ENCODE measurements at regions of chr10 and their contacts with region 1.

Region 1: DNA sequence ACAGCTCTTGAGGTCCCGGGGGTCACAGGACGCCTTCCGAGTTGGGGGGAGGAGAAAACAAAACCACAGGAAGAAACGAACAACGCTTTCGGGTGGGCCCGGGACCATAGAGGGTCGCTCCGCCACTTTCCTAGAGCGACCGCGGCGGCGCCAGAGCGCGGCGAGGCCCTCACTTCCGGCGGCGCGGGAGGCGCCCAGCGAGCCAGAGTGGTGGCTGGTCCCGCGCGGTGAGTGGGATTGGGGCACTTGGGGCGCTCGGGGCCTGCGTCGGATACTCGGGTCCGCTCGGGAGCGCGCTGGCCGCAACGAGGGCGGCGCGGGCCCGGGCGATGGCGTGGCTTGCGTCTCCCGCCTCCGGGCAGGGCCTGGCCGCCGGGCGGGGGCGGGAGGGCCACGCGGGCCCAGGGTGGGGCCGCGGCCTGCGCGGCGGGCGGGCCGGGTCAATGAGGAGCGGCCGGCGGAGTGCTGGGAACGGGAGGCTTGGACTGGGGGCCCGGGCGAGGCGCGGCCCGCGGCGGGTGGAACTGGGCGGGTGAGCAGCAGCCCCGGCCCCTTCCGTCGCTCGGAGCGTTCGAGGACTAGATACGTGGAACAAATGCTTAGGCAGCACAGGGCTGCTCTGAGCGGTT is at the start of gene ZNF22:
- DNase-seq: peak; percentile 35 to 67
- H3K4me3 ChIP-seq: peak within 1 kb of the TSS; percentile 65
- H3K27ac ChIP-seq: peak within 1 kb of the TSS; percentile 60
- H3K4me1 ChIP-seq: peaks cover 41% of the 10 kb centered on the region
- H3K27me3 ChIP-seq: no peaks in the 10 kb centered on the region
- CTCF ChIP-seq: no peak
- total RNA-seq, gene ZNF22: 22.4 and 29.9 TPM in 2 replicates

Region 2: DNA sequence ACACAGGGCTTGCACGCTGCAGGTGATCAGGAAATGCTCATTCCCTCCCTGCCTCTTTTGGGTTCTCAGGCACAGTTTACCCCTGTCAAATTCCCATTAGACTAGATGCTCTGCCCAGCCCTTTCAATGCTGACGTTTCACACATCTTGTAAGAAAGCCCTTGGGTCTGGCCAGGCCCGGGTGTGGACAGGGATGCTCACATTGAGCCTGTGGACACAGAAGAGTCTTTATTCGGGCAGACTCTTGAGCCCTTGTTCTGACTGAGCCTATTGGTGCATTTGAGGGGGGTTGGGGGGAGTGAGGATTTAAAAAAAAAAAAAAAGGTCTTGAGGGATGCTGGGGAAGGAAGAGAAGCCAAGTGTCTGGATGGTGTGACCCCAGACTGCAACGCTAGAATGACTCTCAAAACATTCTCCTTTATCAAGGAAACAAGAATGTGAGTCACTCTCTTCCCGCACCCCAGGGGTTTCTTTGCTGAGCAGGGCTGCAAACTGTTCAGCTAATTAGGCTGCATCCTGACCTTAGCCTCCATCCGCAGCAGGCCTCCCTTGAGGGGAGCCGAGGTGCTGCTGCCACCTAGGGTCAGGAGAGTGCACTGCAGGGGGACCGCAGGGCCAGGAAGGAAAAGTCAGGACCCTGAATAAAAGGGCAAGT is 143.4 kb before region 1 on chr10:
- CTCF ChIA-PET with region 1: no interaction called
- POLR2A ChIA-PET with region 1: no interaction called
- intact Hi-C with region 1: no loop called
- DNase-seq: peak; percentile 39 to 53
- H3K4me3 ChIP-seq: no peak overlapping the region
- H3K27ac ChIP-seq: no peak overlapping the region
- H3K4me1 ChIP-seq: no peaks in the 10 kb centered on the region
- H3K27me3 ChIP-seq: peaks cover 11% of the 10 kb centered on the region; the same call in 1 of the 2 replicates
- CTCF ChIP-seq: peak; percentile 97

Region 3: DNA sequence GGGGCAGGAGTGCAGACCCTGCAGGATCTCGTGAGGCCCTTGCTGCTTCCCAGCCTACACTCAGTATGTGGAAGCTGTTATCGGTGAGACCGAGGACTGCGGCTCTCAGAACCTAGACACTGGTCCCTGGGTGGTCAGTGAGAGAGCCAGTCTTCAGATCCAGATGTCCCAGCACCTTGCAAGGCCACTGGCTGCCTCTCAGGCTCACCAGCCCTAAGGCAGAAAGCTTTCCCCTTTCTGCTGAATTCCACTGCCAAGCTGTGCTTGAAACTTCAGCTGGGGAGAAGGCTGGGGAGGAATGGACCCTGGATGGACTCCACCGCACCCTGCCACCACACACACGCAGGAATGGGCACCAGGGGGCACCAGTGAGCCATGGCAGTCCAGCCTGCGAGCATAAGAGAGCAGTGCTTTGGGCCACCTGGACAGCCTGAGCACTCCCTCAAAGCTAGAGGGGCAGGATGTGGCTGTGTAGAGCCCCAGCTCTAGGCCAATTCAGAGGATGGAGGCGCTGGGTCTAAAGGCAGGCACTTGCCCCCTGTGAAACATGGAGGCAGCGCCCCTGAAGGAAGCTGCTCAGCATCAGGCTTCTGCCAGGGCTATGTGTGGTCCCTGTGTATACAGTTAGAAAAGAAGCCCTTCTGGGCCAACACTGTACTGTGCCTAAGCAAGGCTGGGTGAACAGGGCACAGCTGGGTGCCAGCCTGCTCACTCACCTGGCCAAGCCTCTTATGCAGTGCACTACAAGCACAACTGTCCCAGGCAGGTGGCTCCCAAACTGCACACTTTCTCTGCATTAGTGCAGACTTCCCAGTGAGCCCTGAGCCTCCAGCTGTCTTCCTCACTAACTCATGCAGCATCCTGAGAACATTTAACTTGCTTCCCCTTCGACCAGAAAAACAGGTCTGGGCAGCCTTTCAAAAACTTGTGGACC is 68.1 kb before region 1 on chr10:
- CTCF ChIA-PET with region 1: interaction called, 3 read pairs
- POLR2A ChIA-PET with region 1: no interaction called
- intact Hi-C with region 1: loop called (anchors 2 kb)
- DNase-seq: peak; percentile 52 to 86
- H3K4me3 ChIP-seq: no peak overlapping the region
- H3K27ac ChIP-seq: no peak overlapping the region
- H3K4me1 ChIP-seq: no peaks in the 10 kb centered on the region
- H3K27me3 ChIP-seq: 0 out of 2 replicates have a peak, but pooled peaks cover 6% of the 10 kb centered on the region
- CTCF ChIP-seq: peak; percentile 97

Region 4: DNA sequence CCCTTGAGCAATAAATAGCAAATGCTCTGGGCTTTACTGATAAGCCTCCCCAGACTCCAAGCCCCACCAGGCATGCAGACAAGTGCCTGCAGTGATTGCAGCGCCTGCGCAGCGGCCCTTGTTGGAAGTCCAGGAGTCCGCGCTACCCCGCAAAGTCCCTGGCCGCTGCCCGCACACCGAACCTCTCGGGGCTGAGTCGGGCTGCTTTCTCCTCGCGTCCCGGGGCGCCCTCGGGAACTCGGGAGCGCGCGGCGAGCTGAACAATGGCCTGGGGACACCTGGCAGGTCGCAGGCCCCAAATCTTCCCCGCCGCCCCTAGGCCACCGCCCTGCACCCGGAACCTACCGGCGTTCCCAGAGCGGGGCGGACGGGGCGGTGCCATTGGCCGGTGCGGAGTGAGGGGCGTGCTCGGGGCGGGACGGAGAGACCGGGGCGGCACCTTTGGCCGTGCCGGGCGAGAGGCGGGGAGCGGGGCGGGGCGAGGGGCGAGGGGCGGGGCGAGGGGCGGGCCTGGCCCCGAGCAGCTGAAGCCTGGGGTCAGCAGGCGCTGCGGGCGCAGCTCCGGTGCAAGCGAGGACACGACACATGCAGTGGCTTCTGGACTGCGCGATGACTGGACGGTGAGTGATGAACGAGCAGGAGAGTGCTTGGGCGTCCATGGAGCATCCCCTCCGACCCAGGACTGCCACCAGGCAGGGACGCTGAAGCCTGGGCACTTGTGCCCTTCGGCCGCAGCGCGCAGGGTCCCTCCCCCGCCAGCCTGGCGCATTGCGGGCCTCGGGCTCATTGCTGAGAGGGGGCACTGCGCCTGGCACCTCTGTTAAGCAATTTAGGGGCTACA is 41.4 kb before region 1 on chr10 and contains the start of gene RASSF4:
- CTCF ChIA-PET with region 1: no interaction called
- POLR2A ChIA-PET with region 1: interaction called, 4 read pairs
- intact Hi-C with region 1: loop called (anchors 5 kb)
- DNase-seq: peak; percentile 82 to 96
- H3K4me3 ChIP-seq: peak within 1 kb of the TSS; percentile 80
- H3K27ac ChIP-seq: peak within 1 kb of the TSS; percentile 56
- H3K4me1 ChIP-seq: peaks cover 17% of the 10 kb centered on the region
- H3K27me3 ChIP-seq: no peaks in the 10 kb centered on the region
- CTCF ChIP-seq: no peak
- total RNA-seq, gene RASSF4: 6.5 and 7.6 TPM in 2 replicates

Region 5: DNA sequence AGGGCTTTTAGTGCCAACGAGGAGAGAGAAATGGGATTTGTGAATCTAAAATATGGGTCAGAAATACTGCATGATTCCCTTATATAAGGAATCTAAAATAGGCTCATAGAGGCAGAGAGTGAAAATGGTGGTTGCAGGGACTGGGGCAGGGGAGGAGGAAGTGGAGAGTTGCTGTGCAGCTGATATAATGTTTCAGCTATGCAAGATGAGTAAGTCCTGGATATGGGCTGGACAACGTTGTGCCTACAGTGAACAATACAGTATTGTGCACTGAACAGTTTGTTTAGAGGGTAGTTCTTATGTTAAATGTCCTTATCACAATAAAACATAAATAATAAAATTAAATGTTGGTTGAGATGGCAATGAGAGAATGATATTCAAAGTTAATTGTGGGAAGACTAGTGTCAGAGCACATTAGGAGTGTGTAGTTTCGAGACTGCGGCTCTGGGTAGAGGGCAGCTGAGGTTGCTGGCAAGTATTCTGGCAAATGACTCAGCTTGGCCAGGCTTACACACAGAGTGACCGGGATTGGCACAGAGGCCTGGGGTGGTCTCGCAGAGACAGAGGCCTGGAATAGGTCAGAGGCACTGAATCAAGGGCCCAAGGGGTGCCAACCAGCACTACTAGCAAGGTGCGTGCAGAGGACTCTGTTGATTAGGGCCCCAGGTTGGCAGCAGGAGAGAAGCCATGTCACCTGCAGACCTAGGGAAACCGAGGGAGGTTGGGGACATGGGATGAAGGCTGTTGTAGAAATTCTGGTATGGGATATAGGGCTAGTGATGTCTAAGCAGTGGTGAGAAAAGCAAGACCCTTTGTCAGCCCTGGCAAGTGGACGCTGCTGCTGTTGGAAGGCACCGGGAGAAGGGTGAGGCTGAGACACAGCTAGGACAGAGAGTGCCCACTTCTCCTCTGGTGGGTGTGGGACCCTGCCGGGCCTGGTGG is 19.4 kb before region 1 on chr10:
- CTCF ChIA-PET with region 1: interaction called, 6 read pairs
- POLR2A ChIA-PET with region 1: interaction called, 13 read pairs
- intact Hi-C with region 1: loop called (anchors 1 kb)
- DNase-seq: peak; percentile 65 to 91
- H3K4me3 ChIP-seq: peak overlapping the region; percentile 30; the same call in 1 of the 2 replicates
- H3K27ac ChIP-seq: peak overlapping the region; percentile 92
- H3K4me1 ChIP-seq: peaks cover 67% of the 10 kb centered on the region
- H3K27me3 ChIP-seq: no peaks in the 10 kb centered on the region
- CTCF ChIP-seq: no peak

Region 6: DNA sequence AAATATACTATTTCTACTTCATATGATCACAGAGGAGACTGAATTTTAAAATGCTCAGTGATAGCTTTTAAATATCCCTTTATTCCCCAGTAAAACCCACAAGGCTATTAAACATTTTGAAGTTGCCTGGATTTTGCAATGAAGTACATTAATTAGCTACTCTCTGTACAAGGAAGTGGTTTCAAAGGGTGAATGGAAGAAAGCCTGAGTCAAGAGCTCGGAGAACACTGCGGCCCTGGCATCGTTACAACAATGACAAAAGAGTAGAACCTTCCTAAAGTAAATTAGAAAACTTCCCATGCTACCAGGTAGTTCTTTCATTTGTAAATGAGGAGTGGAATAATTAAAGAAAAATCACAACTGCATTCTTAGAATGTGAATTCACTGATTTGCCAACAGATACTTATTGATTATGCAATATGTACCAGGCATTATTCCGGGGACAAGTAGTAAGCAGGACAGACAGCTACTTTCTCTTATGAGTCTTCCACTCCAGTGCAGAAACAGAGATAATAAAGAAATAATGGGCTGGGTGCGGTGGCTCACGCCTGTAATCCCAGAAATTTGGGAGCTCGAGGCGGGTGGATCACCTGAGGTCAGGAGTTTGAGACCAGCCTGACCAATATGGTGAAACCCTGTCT is 62.8 kb after region 1 on chr10:
- CTCF ChIA-PET with region 1: no interaction called
- POLR2A ChIA-PET with region 1: no interaction called
- intact Hi-C with region 1: no loop called
- DNase-seq: no peak
- H3K4me3 ChIP-seq: no peak overlapping the region
- H3K27ac ChIP-seq: no peak overlapping the region
- H3K4me1 ChIP-seq: no peaks in the 10 kb centered on the region
- H3K27me3 ChIP-seq: no peaks in the 10 kb centered on the region
- CTCF ChIP-seq: no peak

Measured in PC-9 (cell line).